ENCODE measurements at regions of chr2 and their contacts with region 1.

Region 1: GRCh38 chr2:3449086-3449485 is 69.6 kb downstream of the TRAPPC12 start:
- DNase-seq: no peak
- H3K4me3 ChIP-seq: no peak overlapping the region
- H3K27ac ChIP-seq: no peak overlapping the region
- H3K4me1 ChIP-seq: no peaks in the 10 kb centered on the region
- H3K27me3 ChIP-seq: no peaks in the 10 kb centered on the region
- CTCF ChIP-seq: no peak

Region 2: DNA sequence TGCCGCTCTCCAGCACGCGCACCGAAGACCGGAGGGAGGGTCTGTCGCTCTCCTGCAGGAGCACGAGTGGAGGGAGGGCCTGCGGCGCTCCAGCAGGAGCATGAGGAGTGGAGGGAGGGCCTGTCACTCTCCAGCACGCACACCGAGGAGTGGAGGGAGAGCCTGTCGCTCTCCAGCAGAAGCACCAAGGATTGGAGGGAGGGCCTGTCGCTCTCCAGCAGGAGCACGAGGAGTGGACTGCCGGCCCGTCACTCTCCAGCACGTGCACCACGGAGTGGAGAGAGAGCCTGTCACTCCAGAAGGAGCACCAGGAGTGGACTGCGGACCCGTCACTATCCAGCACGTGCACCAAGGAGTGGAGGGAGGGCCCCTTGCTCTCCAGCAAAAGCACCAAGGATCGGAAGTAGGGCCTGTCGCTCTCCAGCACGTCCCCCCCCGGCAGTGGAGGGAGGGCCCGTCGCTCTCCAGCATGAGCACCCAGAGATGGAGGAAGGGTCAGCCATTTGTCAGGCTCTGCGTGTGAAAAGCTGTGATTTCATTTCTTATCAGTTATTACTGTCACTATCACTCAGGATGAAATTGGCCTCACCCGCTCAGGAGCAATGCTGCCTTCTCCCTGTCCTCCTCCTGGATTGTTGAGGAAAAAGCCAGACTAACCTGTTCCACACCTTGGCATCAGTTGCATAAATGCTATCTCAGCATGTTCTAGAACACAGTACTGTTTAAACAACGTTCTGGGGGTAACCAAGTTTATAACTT is 34.3 kb after region 1 on chr2:
- CTCF ChIA-PET with region 1: no interaction called
- dilution Hi-C with region 1: loop called (anchors 5 kb)
- in situ Hi-C with region 1: no loop called
- intact Hi-C with region 1: no loop called
- DNase-seq: no peak
- H3K4me3 ChIP-seq: no peak overlapping the region
- H3K27ac ChIP-seq: no peak overlapping the region
- H3K4me1 ChIP-seq: no peaks in the 10 kb centered on the region
- H3K27me3 ChIP-seq: no peaks in the 10 kb centered on the region
- CTCF ChIP-seq: no peak

Region 3: DNA sequence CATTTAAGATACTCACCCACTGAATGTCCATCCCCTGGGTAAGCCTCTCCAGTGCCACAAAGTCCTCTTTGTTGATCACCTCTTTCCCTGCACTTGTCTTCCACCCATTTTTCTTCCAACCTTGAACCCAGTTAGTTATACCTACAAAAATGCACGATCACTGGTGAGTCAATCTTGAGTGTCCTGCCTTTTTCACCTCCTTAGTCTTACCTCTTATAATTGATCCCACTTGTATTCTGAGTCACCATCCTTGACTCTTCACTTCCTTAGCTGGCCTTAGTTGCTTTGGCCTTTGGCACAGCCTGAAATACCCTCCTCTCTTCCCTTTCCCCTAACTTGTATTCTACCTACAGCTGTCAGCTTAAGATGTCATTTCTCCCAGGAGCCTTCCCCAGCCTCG is 98.8 kb after region 1 on chr2:
- CTCF ChIA-PET with region 1: no interaction called
- dilution Hi-C with region 1: no loop called
- in situ Hi-C with region 1: no loop called
- intact Hi-C with region 1: no loop called
- DNase-seq: no peak
- H3K4me3 ChIP-seq: no peak overlapping the region
- H3K27ac ChIP-seq: no peak overlapping the region
- H3K4me1 ChIP-seq: no peaks in the 10 kb centered on the region
- H3K27me3 ChIP-seq: no peaks in the 10 kb centered on the region
- CTCF ChIP-seq: no peak